Panc1 (cell line): ENCODE measurements at regions of chr19 and their contacts with region 1.

Region 1: DNA sequence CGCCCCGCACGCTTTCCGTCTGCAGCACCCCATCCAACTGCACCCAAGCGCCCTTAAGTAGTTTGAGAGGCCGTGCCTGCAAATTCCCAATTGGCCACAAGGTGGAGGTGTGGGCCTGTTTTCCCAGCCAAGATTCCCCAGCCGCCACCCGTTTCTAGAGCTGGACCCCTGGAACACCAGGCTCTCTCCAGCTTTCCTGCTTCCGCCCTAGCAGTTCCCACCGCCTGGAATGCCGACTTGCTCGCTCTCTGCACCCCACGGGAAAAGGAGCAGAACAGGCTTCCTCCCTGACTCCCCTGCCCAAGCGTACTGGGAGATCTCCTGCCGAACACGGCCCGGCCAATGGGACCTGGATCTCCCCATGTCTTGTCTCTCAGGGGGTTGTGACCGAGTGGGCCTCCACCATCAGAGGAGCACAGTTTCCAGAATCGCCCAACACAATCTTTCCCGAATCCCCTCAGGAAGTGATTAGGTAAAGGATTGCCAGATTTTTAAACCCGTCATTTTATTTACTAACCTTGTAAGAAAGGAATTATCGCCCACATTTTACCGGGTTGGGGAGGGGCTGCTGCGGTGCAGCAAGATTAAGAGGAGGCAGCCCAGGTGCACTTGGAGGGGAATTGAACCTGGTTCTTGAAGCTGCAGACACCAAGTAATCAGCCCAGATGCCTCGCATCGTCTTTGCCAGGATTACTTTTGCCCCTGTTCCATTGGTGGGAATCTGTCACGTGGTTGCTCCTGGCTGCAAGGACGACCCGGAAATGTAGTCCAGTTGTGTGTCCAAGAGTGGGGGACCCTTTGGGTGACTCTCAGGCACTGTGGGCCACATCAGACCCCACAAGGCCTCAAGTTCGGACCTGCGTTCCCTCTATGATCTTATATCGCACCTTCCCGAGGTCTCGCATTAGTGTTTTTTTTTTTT is 3.5 kb upstream of the NAPSA start:
- DNase-seq: no peak
- ATAC-seq: peak; percentile 93
- H3K4me3 ChIP-seq: peak overlapping the region; percentile 62 to 85
- H3K27ac ChIP-seq: peak overlapping the region; percentile 91
- H3K4me1 ChIP-seq: no peaks in the 10 kb centered on the region; the same call in 1 of the 2 replicates
- H3K27me3 ChIP-seq: no peaks in the 10 kb centered on the region
- CTCF ChIP-seq: peak; percentile 86

Region 2: GRCh38 chr19:50383852-50384684 is 15.2 kb after region 1 on chr19 and contains the start of gene POLD1:
- CTCF ChIA-PET with region 1: no interaction called
- POLR2A ChIA-PET with region 1: no interaction called
- in situ Hi-C with region 1: no loop called
- intact Hi-C with region 1: no loop called
- DNase-seq: peak; percentile 78
- ATAC-seq: peak; percentile 93
- H3K4me3 ChIP-seq: peak within 1 kb of the TSS; percentile 72 to 91
- H3K27ac ChIP-seq: peak within 1 kb of the TSS; percentile 87
- H3K4me1 ChIP-seq: peaks cover 4% of the 10 kb centered on the region
- H3K27me3 ChIP-seq: no peaks in the 10 kb centered on the region
- CTCF ChIP-seq: no peak
- total RNA-seq, gene POLD1: 71.7 TPM

Region 3: DNA sequence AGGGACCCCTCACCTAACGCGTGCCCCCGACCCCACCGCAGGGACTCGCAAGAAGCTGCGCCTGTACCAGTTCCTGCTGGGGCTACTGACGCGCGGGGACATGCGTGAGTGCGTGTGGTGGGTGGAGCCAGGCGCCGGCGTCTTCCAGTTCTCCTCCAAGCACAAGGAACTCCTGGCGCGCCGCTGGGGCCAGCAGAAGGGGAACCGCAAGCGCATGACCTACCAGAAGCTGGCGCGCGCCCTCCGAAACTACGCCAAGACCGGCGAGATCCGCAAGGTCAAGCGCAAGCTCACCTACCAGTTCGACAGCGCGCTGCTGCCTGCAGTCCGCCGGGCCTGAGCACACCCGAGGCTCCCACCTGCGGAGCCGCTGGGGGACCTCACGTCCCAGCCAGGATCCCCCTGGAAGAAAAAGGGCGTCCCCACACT is 59.1 kb after region 1 on chr19:
- CTCF ChIA-PET with region 1: interaction called, 11 read pairs
- POLR2A ChIA-PET with region 1: no interaction called
- in situ Hi-C with region 1: no loop called
- intact Hi-C with region 1: no loop called
- DNase-seq: no peak
- ATAC-seq: peak; percentile 71
- H3K4me3 ChIP-seq: peak overlapping the region; percentile 21 to 36
- H3K27ac ChIP-seq: no peak overlapping the region
- H3K4me1 ChIP-seq: no peaks in the 10 kb centered on the region
- H3K27me3 ChIP-seq: no peaks in the 10 kb centered on the region
- CTCF ChIP-seq: no peak